PC-9 (cell line): ENCODE measurements at regions of chr17 and their contacts with region 1.

Region 1: DNA sequence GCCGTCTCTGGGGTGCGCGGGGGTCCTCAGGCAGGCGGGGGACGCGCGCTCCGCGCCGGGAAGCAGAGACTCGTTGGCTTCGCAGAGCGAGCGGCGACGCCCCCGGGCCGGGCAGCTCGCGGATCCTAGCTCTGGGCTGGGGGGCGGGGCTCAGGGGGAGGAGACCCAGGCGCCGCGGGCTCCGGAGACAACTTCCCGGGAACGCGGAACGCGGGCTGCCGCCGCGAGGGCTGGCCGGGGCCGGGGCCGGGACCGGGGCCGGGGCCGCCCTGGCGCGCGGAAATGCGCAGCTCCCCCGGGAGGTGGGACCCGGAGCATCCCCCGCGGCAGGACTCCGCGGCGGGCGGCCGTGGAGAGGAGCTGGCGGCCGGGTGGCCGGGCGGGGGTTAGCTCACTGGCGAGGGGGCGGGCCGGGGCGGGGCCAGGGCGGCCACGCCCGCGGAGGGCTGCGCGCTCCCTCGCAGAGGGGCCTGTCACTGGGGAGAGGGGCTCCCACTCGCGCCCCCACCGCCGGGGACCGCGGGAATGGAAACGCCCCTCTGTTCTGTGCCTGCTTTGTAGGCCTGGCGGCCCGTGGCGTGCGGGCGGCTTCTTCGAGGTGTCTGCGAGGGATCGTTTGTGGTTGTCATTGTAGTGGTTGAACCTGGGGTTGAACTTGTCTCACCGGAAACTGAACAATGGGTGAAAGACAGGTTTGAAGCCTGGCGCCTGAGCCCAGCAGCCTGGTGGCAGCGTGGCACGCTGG is at the start of gene GAS7:
- DNase-seq: no peak
- H3K4me3 ChIP-seq: no peak within 1 kb of the TSS
- H3K27ac ChIP-seq: no peak within 1 kb of the TSS
- H3K4me1 ChIP-seq: no peaks in the 10 kb centered on the region
- H3K27me3 ChIP-seq: no peaks in the 10 kb centered on the region
- CTCF ChIP-seq: no peak
- total RNA-seq, gene GAS7: not detected in 2 replicates

Region 2: GRCh38 chr17:9743096-9743495 is 455.6 kb before region 1 on chr17:
- CTCF ChIA-PET with region 1: no interaction called
- POLR2A ChIA-PET with region 1: interaction called, 25 read pairs
- intact Hi-C with region 1: no loop called
- DNase-seq: no peak
- H3K4me3 ChIP-seq: no peak overlapping the region
- H3K27ac ChIP-seq: no peak overlapping the region
- H3K4me1 ChIP-seq: no peaks in the 10 kb centered on the region
- H3K27me3 ChIP-seq: no peaks in the 10 kb centered on the region
- CTCF ChIP-seq: no peak

Region 3: GRCh38 chr17:10278213-10278612 is 79.5 kb after region 1 on chr17:
- CTCF ChIA-PET with region 1: no interaction called
- POLR2A ChIA-PET with region 1: no interaction called
- intact Hi-C with region 1: no loop called
- DNase-seq: no peak
- H3K4me3 ChIP-seq: no peak overlapping the region
- H3K27ac ChIP-seq: no peak overlapping the region
- H3K4me1 ChIP-seq: no peaks in the 10 kb centered on the region
- H3K27me3 ChIP-seq: peaks cover 5% of the 10 kb centered on the region; the same call in 1 of the 2 replicates
- CTCF ChIP-seq: no peak